Transverse colon (tissue), 4 donors: ENCODE measurements at regions of chr5 and their contacts with region 1.

Region 1: DNA sequence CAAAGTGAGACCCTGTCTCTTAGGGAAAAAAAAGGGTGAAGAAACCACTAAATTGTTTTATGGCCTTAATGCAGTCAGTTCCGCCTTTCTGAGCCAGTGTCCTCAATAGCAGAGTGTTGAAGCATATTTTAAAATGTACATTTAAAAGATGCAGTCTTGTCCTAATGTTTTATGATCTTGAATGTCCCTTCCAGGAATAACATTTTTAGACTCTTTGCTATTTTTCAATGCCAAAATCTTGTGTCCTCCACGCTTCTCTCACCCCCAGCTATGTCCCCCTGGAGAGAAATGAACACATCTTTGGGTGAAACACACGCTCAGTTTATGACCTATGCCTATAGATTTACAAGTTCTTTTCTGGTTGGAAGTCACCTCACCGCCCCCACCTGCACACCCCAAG is 69.8 kb downstream of the CSNK1A1 start:
- DNase-seq: no peak
- H3K4me3 ChIP-seq: no peak overlapping the region
- H3K27ac ChIP-seq: peak overlapping the region; percentile 85 to 91 (median 90)
- H3K4me1 ChIP-seq: peaks cover 21 to 52% (median 36%) of the 10 kb centered on the region in 4 donors
- H3K27me3 ChIP-seq: no peaks in the 10 kb centered on the region
- CTCF ChIP-seq: no peak
- EP300 ChIP-seq: no peak
- POLR2A ChIP-seq: no peak

Region 2: DNA sequence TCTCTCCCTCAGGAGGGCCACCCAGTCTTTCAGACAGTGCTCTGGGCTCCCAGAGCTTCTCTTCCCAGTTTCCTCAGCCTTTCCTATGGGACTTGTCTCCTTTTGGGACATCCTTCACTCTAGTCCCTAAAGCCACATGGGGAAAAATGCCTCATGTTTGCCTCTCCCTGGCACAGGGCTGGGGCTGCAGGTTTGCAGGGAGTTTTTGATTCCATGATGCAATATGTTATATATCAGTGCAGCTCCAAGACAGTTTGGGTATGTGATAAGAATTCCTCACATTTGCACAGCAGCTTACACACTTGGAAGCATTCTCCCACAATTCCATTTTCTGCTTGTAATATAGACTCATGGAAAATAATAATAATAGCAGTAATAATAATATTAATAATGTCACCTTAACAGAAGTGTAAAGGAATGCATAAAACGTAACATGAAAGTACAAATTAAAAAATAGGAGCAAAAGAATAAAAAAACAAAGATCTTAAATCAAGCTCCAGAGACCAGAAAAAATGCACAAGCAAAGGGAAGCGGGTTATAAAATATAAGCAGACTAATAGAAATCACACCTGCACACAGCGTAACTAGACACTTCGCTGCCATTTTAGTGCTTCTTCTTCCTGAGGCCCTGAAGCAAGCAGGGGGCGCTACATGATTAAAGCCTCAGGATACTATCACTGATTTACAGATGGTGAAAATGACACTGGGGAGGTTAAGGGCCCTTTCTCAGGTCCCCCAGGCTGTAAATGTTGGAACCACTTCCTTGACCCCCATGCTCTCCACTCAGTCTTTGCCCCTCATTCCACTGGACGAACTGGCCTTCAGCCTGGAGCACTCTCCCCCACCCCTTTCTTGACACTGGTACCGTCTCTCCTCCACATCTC is 32.4 kb before region 1 on chr5:
- in situ Hi-C with region 1: no loop called
- intact Hi-C with region 1: loop called (anchors 5 kb)
- DNase-seq: peak; percentile 63
- H3K4me3 ChIP-seq: no peak overlapping the region
- H3K27ac ChIP-seq: peak overlapping the region; percentile 86 to 92 (median 90)
- H3K4me1 ChIP-seq: peaks cover 38 to 65% (median 56%) of the 10 kb centered on the region in 4 donors
- H3K27me3 ChIP-seq: no peaks in the 10 kb centered on the region
- CTCF ChIP-seq: peak; percentile 35 to 58 (median 49)
- EP300 ChIP-seq: no peak
- POLR2A ChIP-seq: no peak